ENCODE measurements at regions of chr11 and their contacts with region 1.

Region 1: DNA sequence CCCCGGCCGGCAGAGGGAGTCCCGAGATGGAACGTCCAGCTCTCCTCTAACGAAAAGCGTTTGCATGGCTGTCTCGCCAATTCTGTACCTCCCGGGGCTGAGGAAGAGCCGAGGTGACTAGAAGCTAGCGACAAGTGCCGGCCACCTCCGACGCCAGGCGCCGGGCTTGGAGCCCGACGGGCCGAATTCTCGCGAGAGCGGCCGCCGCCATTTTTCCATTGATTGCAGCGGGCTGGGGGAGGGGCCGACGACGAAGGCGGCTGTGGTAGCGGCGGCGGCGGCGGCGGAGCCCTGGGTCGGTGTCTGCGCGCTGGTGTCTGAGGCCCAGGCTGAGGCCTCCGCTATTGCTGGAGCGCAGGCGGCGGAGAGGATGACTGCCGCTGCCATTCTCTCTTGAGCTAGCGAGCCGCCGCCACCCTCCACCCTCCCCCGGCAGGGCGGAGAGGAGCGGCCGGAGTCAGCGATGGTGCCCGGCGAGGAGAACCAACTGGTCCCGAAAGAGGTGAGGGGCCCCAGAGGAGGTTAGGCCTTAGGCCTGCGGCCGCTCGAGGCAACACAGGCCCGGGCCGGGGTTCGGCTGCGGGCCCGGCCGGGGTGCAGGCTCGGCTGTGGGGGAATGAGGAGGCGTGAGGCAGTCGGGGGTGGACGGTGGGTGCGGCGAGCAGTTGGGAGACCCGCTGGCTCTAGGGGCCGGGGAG is at the start of gene USP47:
- DNase-seq: peak; percentile 90 to 98 (median 95)
- ATAC-seq: peak; percentile 90
- H3K4me3 ChIP-seq: peak within 1 kb of the TSS; percentile 76
- H3K4me3 Mint-ChIP-seq: peak within 1 kb of the TSS in 1 of 10 donors; percentile 59
- H3K27ac ChIP-seq: peak within 1 kb of the TSS; percentile 100
- H3K27ac Mint-ChIP-seq: peak within 1 kb of the TSS in 1 of 9 donors; percentile 64
- H3K4me1 ChIP-seq: peaks cover 27 to 36% of the 10 kb centered on the region in 2 donors
- H3K4me1 Mint-ChIP-seq: peaks cover 0 to 25% (median 3%) of the 10 kb centered on the region in 7 donors
- H3K27me3 ChIP-seq: no peaks in the 10 kb centered on the region
- H3K27me3 Mint-ChIP-seq: peaks cover 0 to 17% (median 13%) of the 10 kb centered on the region in 5 donors
- total RNA-seq, gene USP47: 45.6 to 71.8 (median 59.1) TPM

Region 2: GRCh38 chr11:10750838-10751580 is 1090.9 kb before region 1 on chr11 and contains the start of gene CTR9:
- CTCF ChIA-PET with region 1: interaction called, 3 read pairs
- POLR2A ChIA-PET with region 1: no interaction called
- intact Hi-C with region 1: loop called (anchors 2 to 5 kb)
- DNase-seq: peak; percentile 78 to 94 (median 88)
- ATAC-seq: peak; percentile 96
- H3K4me3 ChIP-seq: peak within 1 kb of the TSS; percentile 79
- H3K4me3 Mint-ChIP-seq: peak within 1 kb of the TSS; percentile 95 to 99 (median 97)
- H3K27ac ChIP-seq: peak within 1 kb of the TSS; percentile 85
- H3K27ac Mint-ChIP-seq: peak within 1 kb of the TSS; percentile 90 to 96 (median 91)
- H3K4me1 ChIP-seq: peaks cover 7 to 8% of the 10 kb centered on the region in 2 donors
- H3K4me1 Mint-ChIP-seq: peaks cover 12 to 36% (median 31%) of the 10 kb centered on the region in 7 donors
- H3K27me3 ChIP-seq: no peaks in the 10 kb centered on the region
- H3K27me3 Mint-ChIP-seq: no peaks in the 10 kb centered on the region
- total RNA-seq, gene CTR9: 23.8 to 64.0 (median 47.8) TPM

Region 3: DNA sequence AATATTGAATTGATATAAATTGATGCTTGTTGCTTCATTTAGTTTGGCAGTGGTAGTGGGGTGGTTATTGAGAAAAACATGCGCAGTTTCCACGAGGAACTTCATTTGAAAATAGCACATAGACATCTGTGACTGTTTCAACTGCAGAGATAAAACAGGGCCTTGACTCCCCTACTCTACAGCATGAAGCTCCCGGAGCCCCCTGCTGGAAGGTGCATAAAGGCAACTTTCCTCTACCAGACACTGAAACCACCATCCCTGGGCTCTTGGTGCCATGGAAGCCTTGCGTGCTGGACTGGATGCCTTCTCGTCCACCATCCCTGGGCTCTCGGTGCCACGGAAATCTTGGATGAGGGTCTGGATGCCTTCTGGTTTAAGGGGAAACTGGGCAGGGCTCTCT is 684.7 kb before region 1 on chr11:
- CTCF ChIA-PET with region 1: no interaction called
- POLR2A ChIA-PET with region 1: no interaction called
- intact Hi-C with region 1: loop called in 1 of 2 experiments (anchors 2 kb)
- DNase-seq: peak in 8 of 9 donors; percentile 28 to 79 (median 72)
- ATAC-seq: peak; percentile 75
- H3K4me3 ChIP-seq: no peak overlapping the region
- H3K4me3 Mint-ChIP-seq: peak overlapping the region in 6 of 10 donors; percentile 75 to 92 (median 84)
- H3K27ac ChIP-seq: peak overlapping the region; percentile 72
- H3K27ac Mint-ChIP-seq: peak overlapping the region in 8 of 9 donors; percentile 86 to 99 (median 94)
- H3K4me1 ChIP-seq: peaks cover 11 to 28% of the 10 kb centered on the region in 2 donors
- H3K4me1 Mint-ChIP-seq: peaks cover 15 to 49% (median 44%) of the 10 kb centered on the region in 7 donors
- H3K27me3 ChIP-seq: no peaks in the 10 kb centered on the region
- H3K27me3 Mint-ChIP-seq: peaks cover 0 to 8% (median 0%) of the 10 kb centered on the region in 5 donors

Region 4: DNA sequence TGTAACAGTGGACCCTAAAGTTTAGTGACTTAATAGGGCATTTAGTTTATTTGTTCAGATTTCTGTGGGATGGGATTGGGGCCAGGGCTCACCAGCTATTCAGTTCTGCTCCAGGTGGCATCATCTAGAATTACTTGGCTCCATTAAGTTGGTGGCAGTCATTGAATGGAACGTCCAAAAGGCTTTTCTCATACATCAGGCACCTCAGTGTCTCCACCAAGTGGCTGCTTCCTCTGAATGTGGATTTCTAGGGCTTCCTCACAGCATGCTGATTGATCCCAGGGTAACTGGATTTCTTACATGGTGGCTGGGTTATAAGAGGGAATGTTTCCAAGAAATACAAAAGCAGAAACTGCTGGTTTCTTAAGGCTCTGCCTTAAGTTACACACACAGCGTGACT is 34.6 kb after region 1 on chr11:
- CTCF ChIA-PET with region 1: interaction called, 4 read pairs
- POLR2A ChIA-PET with region 1: interaction called, 5 read pairs
- intact Hi-C with region 1: loop called in 1 of 2 experiments (anchors 2 kb)
- DNase-seq: no peak
- ATAC-seq: no peak
- H3K4me3 ChIP-seq: no peak overlapping the region
- H3K4me3 Mint-ChIP-seq: peak overlapping the region in 1 of 10 donors; percentile 4
- H3K27ac ChIP-seq: no peak overlapping the region
- H3K27ac Mint-ChIP-seq: peak overlapping the region in 1 of 9 donors; percentile 47
- H3K4me1 ChIP-seq: peaks cover 6 to 8% of the 10 kb centered on the region in 2 donors
- H3K4me1 Mint-ChIP-seq: peaks cover 25 to 91% (median 66%) of the 10 kb centered on the region in 7 donors
- H3K27me3 ChIP-seq: no peaks in the 10 kb centered on the region
- H3K27me3 Mint-ChIP-seq: no peaks in the 10 kb centered on the region

Region 5: DNA sequence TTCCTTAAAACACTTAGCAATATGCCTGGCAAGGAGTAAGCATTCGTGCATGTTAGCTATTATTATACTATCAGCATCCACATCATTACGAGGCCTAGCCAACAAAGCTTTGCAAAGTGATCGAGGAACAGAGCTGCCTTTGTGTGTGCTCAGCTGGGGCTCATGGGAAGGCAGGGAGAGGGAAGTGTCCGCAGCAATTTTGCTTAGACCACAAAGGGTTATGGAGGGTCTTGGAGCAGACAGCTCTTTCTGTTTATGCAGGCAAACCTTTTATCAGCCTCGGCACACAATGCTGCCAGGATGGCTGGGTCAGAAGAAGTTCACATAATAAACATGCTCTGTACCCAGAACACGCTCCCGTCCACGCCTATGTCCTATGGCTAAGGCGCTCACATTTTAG is 177.5 kb after region 1 on chr11:
- CTCF ChIA-PET with region 1: no interaction called
- POLR2A ChIA-PET with region 1: no interaction called
- intact Hi-C with region 1: no loop called
- DNase-seq: no peak
- ATAC-seq: no peak
- H3K4me3 ChIP-seq: no peak overlapping the region
- H3K4me3 Mint-ChIP-seq: no peak overlapping the region
- H3K27ac ChIP-seq: no peak overlapping the region
- H3K27ac Mint-ChIP-seq: no peak overlapping the region
- H3K4me1 ChIP-seq: no peaks in the 10 kb centered on the region
- H3K4me1 Mint-ChIP-seq: no peaks in the 10 kb centered on the region
- H3K27me3 ChIP-seq: no peaks in the 10 kb centered on the region
- H3K27me3 Mint-ChIP-seq: peaks cover 12 to 66% (median 22%) of the 10 kb centered on the region in 5 donors

Region 6: GRCh38 chr11:12052676-12053605 is 211.1 kb after region 1 on chr11:
- CTCF ChIA-PET with region 1: no interaction called
- POLR2A ChIA-PET with region 1: no interaction called
- intact Hi-C with region 1: no loop called
- DNase-seq: no peak
- ATAC-seq: no peak
- H3K4me3 ChIP-seq: no peak overlapping the region
- H3K4me3 Mint-ChIP-seq: no peak overlapping the region
- H3K27ac ChIP-seq: no peak overlapping the region
- H3K27ac Mint-ChIP-seq: peak overlapping the region in 1 of 9 donors; percentile 63
- H3K4me1 ChIP-seq: no peaks in the 10 kb centered on the region
- H3K4me1 Mint-ChIP-seq: peaks cover 0 to 9% (median 0%) of the 10 kb centered on the region in 7 donors
- H3K27me3 ChIP-seq: no peaks in the 10 kb centered on the region
- H3K27me3 Mint-ChIP-seq: no peaks in the 10 kb centered on the region

Region 7: GRCh38 chr11:12224537-12224893 is 382.6 kb after region 1 on chr11:
- CTCF ChIA-PET with region 1: no interaction called
- POLR2A ChIA-PET with region 1: no interaction called
- intact Hi-C with region 1: loop called in 1 of 2 experiments (anchors 1 kb)
- DNase-seq: peak; percentile 55 to 86 (median 81)
- ATAC-seq: peak; percentile 97
- H3K4me3 ChIP-seq: peak overlapping the region; percentile 52
- H3K4me3 Mint-ChIP-seq: peak overlapping the region; percentile 67 to 91 (median 75)
- H3K27ac ChIP-seq: peak overlapping the region; percentile 54
- H3K27ac Mint-ChIP-seq: peak overlapping the region; percentile 87 to 97 (median 91)
- H3K4me1 ChIP-seq: peaks cover 36 to 41% of the 10 kb centered on the region in 2 donors
- H3K4me1 Mint-ChIP-seq: peaks cover 33 to 51% (median 47%) of the 10 kb centered on the region in 7 donors
- H3K27me3 ChIP-seq: no peaks in the 10 kb centered on the region
- H3K27me3 Mint-ChIP-seq: no peaks in the 10 kb centered on the region

Region 8: GRCh38 chr11:13668102-13668956 is 1826.5 kb after region 1 on chr11 and contains the start of gene FAR1:
- CTCF ChIA-PET with region 1: no interaction called
- POLR2A ChIA-PET with region 1: no interaction called
- intact Hi-C with region 1: loop called in 1 of 2 experiments (anchors 5 kb)
- DNase-seq: peak; percentile 89 to 97 (median 96)
- ATAC-seq: peak; percentile 94
- H3K4me3 ChIP-seq: peak within 1 kb of the TSS; percentile 90
- H3K4me3 Mint-ChIP-seq: peak within 1 kb of the TSS; percentile 90 to 100 (median 97)
- H3K27ac ChIP-seq: peak within 1 kb of the TSS; percentile 69
- H3K27ac Mint-ChIP-seq: peak within 1 kb of the TSS; percentile 69 to 99 (median 93)
- H3K4me1 ChIP-seq: peaks cover 14 to 17% of the 10 kb centered on the region in 2 donors
- H3K4me1 Mint-ChIP-seq: peaks cover 37 to 48% (median 45%) of the 10 kb centered on the region in 7 donors
- H3K27me3 ChIP-seq: no peaks in the 10 kb centered on the region
- H3K27me3 Mint-ChIP-seq: peaks cover 0 to 21% (median 7%) of the 10 kb centered on the region in 5 donors
- total RNA-seq, gene FAR1: 31.4 to 53.7 (median 33.8) TPM